Colonic mucosa (tissue), 4 donors: ENCODE measurements at regions of chr20 and their contacts with region 1.

Region 1: DNA sequence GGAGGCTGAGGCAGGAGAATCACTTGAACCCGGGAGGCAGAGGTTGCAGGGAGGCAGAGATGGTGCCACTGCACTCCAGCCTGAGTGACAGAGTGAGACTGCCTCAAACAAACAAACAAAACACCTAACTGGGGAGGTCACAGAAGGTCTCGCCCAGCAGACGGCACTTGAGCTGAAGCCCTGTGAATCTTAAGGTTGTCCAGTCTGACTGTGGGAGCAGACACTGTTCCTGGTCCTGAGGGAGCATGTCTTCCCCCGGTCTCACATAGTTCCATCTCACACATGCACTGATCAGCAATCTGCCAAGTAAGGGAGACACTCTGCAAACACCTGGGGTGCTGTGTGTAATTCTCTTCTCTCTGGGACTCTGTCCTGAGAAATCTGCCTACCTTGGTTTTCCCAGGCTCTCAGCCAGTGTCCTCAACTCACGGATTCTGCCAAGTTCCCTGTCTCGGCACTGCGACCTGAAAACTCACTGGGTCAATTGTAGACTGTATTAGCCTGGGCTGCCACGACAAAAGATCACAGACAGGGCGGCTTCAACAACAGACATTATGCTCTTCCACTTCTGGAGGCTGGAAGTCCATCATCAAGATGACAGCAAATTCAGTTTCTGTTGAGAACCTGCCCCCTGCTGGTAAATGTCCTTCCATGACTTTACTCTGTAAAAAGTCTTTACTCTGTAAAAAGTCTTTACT is 94.3 kb downstream of the JPH2 start:
- DNase-seq: peak; percentile 53
- H3K4me3 ChIP-seq: no peak overlapping the region
- H3K27ac ChIP-seq: no peak overlapping the region
- H3K4me1 ChIP-seq: no peaks in the 10 kb centered on the region
- H3K27me3 ChIP-seq: no peaks in the 10 kb centered on the region
- CTCF ChIP-seq: peak; percentile 37

Region 2: GRCh38 chr20:43331906-43332305 is 760.8 kb before region 1 on chr20:
- intact Hi-C with region 1: no loop called
- DNase-seq: no peak
- H3K4me3 ChIP-seq: no peak overlapping the region
- H3K27ac ChIP-seq: no peak overlapping the region
- H3K4me1 ChIP-seq: no peaks in the 10 kb centered on the region
- H3K27me3 ChIP-seq: no peaks in the 10 kb centered on the region
- CTCF ChIP-seq: no peak

Region 3: DNA sequence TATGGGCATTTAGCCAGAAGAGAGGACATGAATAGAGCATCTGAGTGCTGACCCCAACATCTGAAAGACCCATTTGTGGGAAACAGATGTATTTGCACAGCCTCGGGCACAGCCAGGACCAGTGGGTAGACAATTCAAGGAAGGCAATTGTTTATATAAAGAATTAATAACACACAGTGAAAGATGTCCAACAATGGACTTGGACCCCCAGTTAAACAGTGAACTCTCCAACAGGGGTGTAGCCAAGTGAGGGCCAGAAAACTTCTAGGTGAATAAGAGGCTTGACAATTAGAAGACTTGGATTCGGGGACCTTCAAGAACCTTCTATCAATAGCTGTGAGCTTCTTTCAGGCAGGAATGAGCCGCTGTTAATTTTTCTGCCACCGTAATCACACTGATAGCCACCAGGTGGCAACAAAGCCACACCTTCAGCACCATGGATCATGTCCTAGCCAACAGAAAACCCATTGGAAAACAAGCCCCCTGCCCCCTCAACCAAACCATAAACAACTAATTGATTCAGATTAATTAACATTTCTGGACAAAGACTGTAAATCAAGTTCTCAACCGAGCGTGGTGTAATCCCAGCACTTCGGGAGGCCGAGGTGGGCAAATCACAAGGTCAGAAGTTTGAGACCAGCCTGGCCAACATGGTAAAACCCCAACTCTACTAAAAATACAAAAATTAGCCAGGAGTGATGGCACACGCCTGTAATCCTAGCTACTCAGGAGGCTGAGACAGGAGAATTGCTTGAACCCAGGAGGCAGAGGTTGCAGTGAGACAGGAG is 643.8 kb before region 1 on chr20:
- intact Hi-C with region 1: loop called (anchors 10 kb)
- DNase-seq: peak; percentile 30
- H3K4me3 ChIP-seq: no peak overlapping the region
- H3K27ac ChIP-seq: no peak overlapping the region
- H3K4me1 ChIP-seq: no peaks in the 10 kb centered on the region
- H3K27me3 ChIP-seq: no peaks in the 10 kb centered on the region
- CTCF ChIP-seq: peak; percentile 63

Region 4: GRCh38 chr20:43537921-43538877 is 554.5 kb before region 1 on chr20:
- intact Hi-C with region 1: loop called (anchors 5 kb)
- DNase-seq: peak; percentile 80
- H3K4me3 ChIP-seq: no peak overlapping the region
- H3K27ac ChIP-seq: no peak overlapping the region
- H3K4me1 ChIP-seq: no peaks in the 10 kb centered on the region
- H3K27me3 ChIP-seq: no peaks in the 10 kb centered on the region
- CTCF ChIP-seq: peak; percentile 95

Region 5: GRCh38 chr20:44056010-44056698 is 36.5 kb before region 1 on chr20:
- intact Hi-C with region 1: no loop called
- DNase-seq: no peak
- H3K4me3 ChIP-seq: no peak overlapping the region
- H3K27ac ChIP-seq: no peak overlapping the region
- H3K4me1 ChIP-seq: no peaks in the 10 kb centered on the region
- H3K27me3 ChIP-seq: no peaks in the 10 kb centered on the region
- CTCF ChIP-seq: no peak

Region 6: DNA sequence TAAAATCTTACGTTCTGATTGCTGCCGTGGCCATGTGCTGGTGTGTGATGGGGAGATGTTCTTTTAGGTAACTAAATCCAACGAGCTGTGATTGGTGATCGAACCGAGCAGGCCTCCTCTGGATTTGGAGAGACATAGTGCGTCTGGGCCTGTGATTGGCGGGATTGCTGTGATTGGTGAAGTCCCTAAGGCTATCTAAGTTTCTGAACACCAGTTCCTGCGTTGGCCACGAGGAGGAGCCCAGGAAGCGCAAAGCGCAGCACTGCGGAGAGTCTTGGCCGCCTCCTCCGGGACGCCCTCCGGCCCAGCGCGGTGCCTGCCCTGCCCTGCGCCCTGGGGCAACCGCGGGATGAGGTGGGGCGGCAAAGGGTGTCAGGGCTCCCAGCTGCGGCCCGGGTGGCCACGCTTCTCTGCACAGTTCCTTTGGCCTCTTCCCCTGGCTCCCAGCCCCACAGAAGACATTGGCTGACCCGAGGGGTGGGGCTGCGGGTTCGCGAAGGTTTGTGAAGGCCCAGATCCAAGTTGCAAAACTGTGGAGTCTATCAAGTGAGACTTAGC is 295.8 kb after region 1 on chr20:
- intact Hi-C with region 1: no loop called
- DNase-seq: peak; percentile 90
- H3K4me3 ChIP-seq: no peak overlapping the region
- H3K27ac ChIP-seq: no peak overlapping the region
- H3K4me1 ChIP-seq: peaks cover 8% of the 10 kb centered on the region
- H3K27me3 ChIP-seq: no peaks in the 10 kb centered on the region
- CTCF ChIP-seq: peak; percentile 71

Region 7: GRCh38 chr20:44521484-44522481 is 429.1 kb after region 1 on chr20 and contains the start of gene SERINC3:
- intact Hi-C with region 1: no loop called
- DNase-seq: peak; percentile 98
- H3K4me3 ChIP-seq: peak within 1 kb of the TSS; percentile 89
- H3K27ac ChIP-seq: peak within 1 kb of the TSS; percentile 95
- H3K4me1 ChIP-seq: peaks cover 14% of the 10 kb centered on the region
- H3K27me3 ChIP-seq: no peaks in the 10 kb centered on the region
- CTCF ChIP-seq: no peak
- total RNA-seq, gene SERINC3: 82.8 to 121 TPM